Posterior vena cava (tissue), 2 donors: ENCODE measurements at regions of chr2 and their contacts with region 1.

Region 1: DNA sequence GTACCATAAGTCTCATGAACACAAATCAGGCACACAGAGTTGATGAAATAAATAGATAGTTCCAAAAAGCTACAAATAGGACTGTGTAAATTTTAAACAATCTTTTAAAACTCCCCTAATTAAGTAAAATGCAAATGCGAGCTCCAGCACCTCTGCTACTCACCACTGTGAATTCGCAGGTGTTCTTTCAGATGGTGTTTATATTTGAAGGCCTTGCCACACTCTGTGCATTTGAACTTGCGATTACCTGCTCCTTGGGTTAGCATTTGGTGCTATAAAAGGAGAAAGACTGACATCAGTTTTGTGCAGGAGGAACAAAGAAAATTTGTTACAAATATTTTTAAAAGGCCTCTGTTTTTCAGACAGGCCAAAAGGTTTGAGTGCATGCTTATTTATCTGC is 118.9 kb downstream of the ZEB2 start:
- DNase-seq: no peak

Region 2: GRCh38 chr2:144432921-144433320 is 31.9 kb after region 1 on chr2:
- intact Hi-C with region 1: loop called in 1 of 2 experiments (anchors 2 kb)
- DNase-seq: no peak